Common myeloid progenitor, CD34-positive (primary cell): ENCODE measurements at regions of chr2 and their contacts with region 1.

Region 1: DNA sequence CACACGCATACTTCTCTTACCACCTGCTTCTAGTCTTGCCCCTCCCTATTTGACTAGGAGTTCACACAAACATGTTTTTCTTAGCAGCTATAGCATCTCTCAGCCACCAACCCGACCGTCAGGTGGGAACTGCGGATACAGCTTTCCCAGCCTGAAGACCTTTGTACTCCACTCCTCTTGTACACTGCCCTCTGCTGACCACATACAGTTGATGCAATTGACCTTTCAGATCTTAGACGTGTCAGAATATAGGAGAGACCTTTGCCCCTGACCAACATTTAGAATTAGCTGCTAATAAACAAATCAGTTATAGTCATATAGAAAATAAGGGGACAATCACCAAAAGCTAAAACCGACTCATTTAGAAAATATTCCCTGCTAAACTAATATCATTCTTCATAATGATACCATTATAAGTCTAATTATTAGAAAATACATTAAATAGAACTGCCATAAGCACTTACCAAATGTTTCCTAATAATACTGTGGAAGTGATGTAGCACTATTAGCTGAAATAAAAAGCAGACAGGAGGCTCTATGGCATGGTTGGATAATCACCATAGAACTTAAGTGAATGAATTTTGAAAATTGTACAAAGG is 208.4 kb downstream of the RAD51AP2 start:
- DNase-seq: peak; percentile 61 to 77 (median 77)
- H3K4me3 ChIP-seq: no peak overlapping the region
- H3K27ac ChIP-seq: no peak overlapping the region
- H3K4me1 ChIP-seq: peaks cover 0 to 3% (median 0%) of the 10 kb centered on the region in 4 experiments
- H3K27me3 ChIP-seq: no peaks in the 10 kb centered on the region

Region 2: DNA sequence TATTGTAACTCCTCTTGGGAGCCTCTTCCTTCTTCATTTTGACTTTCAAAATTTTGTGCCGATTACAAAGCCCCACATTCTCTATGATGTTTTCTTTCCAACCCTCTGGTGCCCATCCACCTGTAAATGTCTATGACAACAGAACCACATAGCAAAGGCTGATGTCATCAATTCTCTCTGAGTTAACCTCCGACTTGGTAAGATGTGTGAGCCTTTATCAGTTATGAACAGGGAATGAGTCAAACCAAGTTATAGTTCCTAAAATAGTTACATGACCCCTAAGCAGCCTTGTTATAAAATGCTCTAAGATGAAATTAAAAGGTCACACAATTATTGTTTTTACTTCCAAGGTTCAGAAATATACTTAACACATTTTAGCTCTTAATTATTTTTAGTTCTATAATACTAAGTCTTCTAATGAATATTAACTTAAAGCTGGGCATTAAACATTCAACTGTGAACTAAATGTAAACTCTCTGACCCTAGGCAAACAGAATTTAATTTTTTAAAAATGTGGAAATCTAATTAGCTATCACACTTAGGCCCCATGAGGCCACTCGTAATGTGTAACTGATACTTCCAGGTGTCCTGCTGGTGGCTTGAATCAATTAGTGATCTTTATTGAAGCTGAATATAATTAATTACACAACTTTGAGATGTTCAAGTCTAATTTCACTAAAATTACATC is 541.9 kb before region 1 on chr2:
- CTCF ChIA-PET with region 1: interaction called, 56 read pairs
- POLR2A ChIA-PET with region 1: no interaction called
- DNase-seq: no peak
- H3K4me3 ChIP-seq: no peak overlapping the region
- H3K27ac ChIP-seq: no peak overlapping the region
- H3K4me1 ChIP-seq: peaks cover 0 to 11% (median 0%) of the 10 kb centered on the region in 4 experiments
- H3K27me3 ChIP-seq: peaks cover 0 to 3% (median 0%) of the 10 kb centered on the region in 5 experiments